GM18951 (cell line): ENCODE measurements at regions of chr6 and their contacts with region 1.

Region 1: GRCh38 chr6:85678602-85679444 is 36.1 kb upstream of the SYNCRIP start:
- POLR2A ChIP-seq: peak; percentile 100

Region 2: DNA sequence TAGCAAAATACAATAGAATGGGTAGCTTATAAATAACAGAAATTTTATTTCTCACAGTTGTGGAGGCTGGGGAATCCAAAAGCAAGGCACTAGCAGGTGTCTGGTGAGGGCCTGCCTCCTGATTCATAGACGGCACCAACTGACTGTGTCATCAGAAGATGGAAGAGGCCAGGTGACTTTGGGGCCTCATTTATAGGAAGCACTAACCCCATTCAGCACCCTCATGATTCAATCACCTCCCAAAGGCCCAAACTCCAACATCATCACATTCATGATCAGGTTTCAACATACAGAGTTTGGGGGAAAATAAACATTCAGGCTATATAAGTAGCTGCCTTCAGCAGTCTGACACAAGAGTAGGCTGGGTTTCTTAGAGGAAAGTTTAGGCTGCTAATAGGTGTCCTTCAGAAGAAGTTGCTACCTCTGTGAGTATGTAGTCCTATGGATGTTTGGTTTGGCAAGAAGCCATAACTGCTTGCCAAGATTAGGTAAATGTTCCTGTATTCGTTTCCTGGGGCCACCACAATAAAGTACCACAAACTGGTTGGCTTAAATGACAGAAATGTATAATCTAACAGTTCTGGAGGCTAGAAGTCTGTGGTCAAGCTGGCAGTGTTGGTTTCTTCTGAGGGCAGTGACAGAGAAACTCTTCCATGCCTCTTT is 180.1 kb before region 1 on chr6:
- in situ Hi-C with region 1: no loop called
- POLR2A ChIP-seq: no peak

Region 3: DNA sequence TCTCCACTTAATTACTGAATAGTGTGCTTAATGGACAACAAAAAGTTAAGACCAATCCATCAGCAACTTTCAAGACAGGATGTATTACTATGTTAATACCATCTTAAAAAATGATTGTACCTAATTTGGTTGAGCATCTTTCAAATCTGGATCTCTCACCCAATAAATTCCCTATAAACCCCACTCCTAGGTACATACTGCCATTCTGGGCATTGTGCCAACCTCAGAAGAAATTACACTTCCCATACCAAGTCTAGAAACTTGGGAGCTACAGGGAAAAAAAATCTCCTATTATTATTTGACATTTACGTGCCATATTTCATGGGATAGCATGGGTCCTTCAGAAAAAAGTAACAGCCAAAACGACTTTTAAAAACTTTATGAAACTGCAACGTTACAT is 41.2 kb before region 1 on chr6:
- in situ Hi-C with region 1: loop called (anchors 5 kb)
- POLR2A ChIP-seq: no peak